ENCODE measurements at regions of chr3 and their contacts with region 1.

Region 1: DNA sequence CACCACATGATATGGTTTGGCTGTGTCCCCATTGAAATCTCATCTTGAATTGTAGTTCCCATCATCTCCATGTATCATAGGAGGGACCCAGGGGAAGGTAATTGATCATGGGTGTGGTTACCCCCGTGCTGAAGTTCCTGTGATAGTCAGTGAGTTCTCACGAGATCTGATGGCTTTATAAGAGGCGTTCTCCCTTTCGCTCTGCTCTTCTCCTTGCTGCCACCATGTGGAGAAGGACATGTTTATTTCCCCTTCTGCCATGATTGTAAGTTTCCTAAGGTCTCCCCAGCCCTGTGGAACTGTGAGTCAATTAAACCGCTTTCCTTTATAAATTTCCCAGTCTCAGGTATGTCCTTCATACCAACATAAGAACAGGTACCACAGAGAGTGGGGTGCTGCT is 21.9 kb downstream of the OSTN start:
- DNase-seq: peak; percentile 24
- H3K4me3 ChIP-seq: no peak overlapping the region
- H3K27ac ChIP-seq: no peak overlapping the region
- H3K4me1 ChIP-seq: no peaks in the 10 kb centered on the region
- CTCF ChIP-seq: peak; percentile 62

Region 2: GRCh38 chr3:190941694-190942260 is 279.1 kb before region 1 on chr3:
- CTCF ChIA-PET with region 1: no interaction called
- POLR2A ChIA-PET with region 1: no interaction called
- intact Hi-C with region 1: loop called (anchors 10 kb)
- DNase-seq: no peak
- H3K4me3 ChIP-seq: no peak overlapping the region
- H3K27ac ChIP-seq: no peak overlapping the region
- H3K4me1 ChIP-seq: no peaks in the 10 kb centered on the region
- CTCF ChIP-seq: no peak

Region 3: DNA sequence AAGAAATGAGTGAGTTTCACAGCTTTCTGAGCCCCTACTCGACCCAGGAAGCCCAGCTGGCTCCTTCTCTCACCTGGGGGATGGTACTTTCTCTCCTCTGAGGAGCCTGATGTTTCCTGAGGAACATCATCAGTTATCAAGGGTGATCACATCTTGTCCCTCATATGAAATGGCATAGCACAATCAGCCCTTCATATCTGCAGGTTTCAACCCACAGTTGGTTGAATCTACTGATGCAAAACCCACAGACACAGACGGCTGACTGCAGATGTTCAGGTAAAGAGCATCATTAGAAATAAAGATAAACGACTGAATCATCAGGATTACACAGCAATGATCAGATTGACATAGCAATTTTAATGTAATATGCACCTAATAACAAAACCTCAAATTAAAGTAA is 115.5 kb before region 1 on chr3:
- CTCF ChIA-PET with region 1: no interaction called
- POLR2A ChIA-PET with region 1: no interaction called
- intact Hi-C with region 1: no loop called
- DNase-seq: peak; percentile 96
- H3K4me3 ChIP-seq: peak overlapping the region; percentile 37
- H3K27ac ChIP-seq: peak overlapping the region; percentile 93
- H3K4me1 ChIP-seq: peaks cover 39% of the 10 kb centered on the region
- CTCF ChIP-seq: no peak

Region 4: GRCh38 chr3:191382661-191383060 is 161.8 kb after region 1 on chr3:
- CTCF ChIA-PET with region 1: no interaction called
- POLR2A ChIA-PET with region 1: no interaction called
- intact Hi-C with region 1: no loop called
- DNase-seq: peak; percentile 55
- H3K4me3 ChIP-seq: no peak overlapping the region
- H3K27ac ChIP-seq: no peak overlapping the region
- H3K4me1 ChIP-seq: peaks cover 28% of the 10 kb centered on the region
- CTCF ChIP-seq: no peak

Measured in OCI-LY7 (cell line).